Astrocyte of the cerebellum (primary cell): ENCODE measurements at regions of chr2 and their contacts with region 1.

Region 1: GRCh38 chr2:46329803-46330775 is 32.9 kb downstream of the EPAS1 start:
- DNase-seq: peak; percentile 63
- H3K4me3 ChIP-seq: no peak overlapping the region
- CTCF ChIP-seq: no peak

Region 2: GRCh38 chr2:46134531-46135181 is 195.4 kb before region 1 on chr2:
- in situ Hi-C with region 1: no loop called
- DNase-seq: no peak
- H3K4me3 ChIP-seq: no peak overlapping the region
- CTCF ChIP-seq: no peak

Region 3: GRCh38 chr2:46229134-46230063 is 100.7 kb before region 1 on chr2:
- in situ Hi-C with region 1: no loop called
- DNase-seq: peak; percentile 95
- H3K4me3 ChIP-seq: no peak overlapping the region
- CTCF ChIP-seq: peak; percentile 26

Region 4: DNA sequence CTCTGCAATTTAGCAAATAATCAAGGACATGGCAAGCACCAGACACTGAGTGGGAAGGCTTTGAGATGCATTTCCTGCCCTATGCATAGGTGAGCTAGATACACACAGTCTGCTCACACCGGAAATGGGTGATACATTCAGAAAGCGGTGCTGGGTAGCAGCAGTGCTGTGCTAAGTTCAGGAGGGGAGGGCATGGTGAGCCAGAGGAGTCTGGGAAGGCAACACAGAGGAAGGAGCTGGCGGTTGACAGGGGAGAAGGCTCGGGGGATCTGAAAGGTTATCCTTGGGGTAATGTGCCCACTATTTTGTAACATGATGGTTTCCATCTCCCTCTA is 90.3 kb before region 1 on chr2:
- in situ Hi-C with region 1: loop called (anchors 5 kb)
- DNase-seq: no peak
- H3K4me3 ChIP-seq: no peak overlapping the region
- CTCF ChIP-seq: no peak

Region 5: GRCh38 chr2:46275973-46276372 is 54.1 kb before region 1 on chr2:
- in situ Hi-C with region 1: loop called (anchors 10 kb)
- DNase-seq: no peak
- H3K4me3 ChIP-seq: no peak overlapping the region
- CTCF ChIP-seq: no peak

Region 6: DNA sequence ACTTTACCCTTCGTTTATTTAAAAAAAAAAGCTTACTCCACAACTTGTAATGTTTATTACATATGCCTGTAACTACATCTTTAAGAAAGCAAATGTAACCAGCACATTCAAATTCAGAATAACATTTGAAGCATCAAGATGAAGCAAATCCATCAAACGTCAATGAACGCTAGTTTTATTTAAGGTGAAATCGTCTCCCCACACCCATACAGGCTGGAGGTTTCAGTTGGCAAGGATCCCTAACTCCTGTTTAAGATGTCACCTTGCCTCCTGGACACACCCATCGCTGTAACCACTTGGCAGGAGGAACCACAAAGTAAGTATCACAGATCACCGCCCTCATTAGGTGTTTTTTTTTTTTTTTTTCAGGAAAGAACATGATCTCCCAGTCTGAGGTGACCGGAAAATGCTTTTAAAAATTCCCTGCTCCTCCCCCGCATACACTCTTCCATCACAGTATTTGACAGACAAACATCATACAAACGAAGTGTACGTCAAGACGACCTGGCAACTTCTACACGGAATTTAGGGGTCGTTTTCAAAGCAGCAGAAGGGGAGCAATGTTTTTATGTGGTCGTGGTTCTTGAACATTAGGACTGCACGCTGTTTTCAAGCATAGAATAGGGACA is 844.8 kb after region 1 on chr2:
- in situ Hi-C with region 1: no loop called
- DNase-seq: peak; percentile 56
- H3K4me3 ChIP-seq: peak overlapping the region; percentile 97
- CTCF ChIP-seq: no peak